Common myeloid progenitor, CD34-positive (primary cell): ENCODE measurements at regions of chr19 and their contacts with region 1.

Region 1: GRCh38 chr19:7799640-7800355 is 30.2 kb upstream of the EVI5L start:
- DNase-seq: peak; percentile 50 to 67 (median 66)
- H3K4me3 ChIP-seq: peak overlapping the region in 5 of 7 experiments; percentile 6 to 71 (median 51)
- H3K27ac ChIP-seq: no peak overlapping the region
- H3K4me1 ChIP-seq: peaks cover 0 to 11% (median 7%) of the 10 kb centered on the region in 4 experiments
- H3K27me3 ChIP-seq: peaks cover 0 to 12% (median 4%) of the 10 kb centered on the region in 5 experiments

Region 2: GRCh38 chr19:7652061-7652641 is 147.6 kb before region 1 on chr19:
- CTCF ChIA-PET with region 1: interaction called, 19 read pairs
- POLR2A ChIA-PET with region 1: no interaction called
- DNase-seq: peak; percentile 80 to 90 (median 90)
- H3K4me3 ChIP-seq: peak overlapping the region in 5 of 7 experiments; percentile 21 to 72 (median 40)
- H3K27ac ChIP-seq: no peak overlapping the region
- H3K4me1 ChIP-seq: peaks cover 0 to 26% (median 5%) of the 10 kb centered on the region in 4 experiments
- H3K27me3 ChIP-seq: peaks cover 0 to 4% (median 0%) of the 10 kb centered on the region in 5 experiments

Region 3: GRCh38 chr19:7685541-7686416 is 114.0 kb before region 1 on chr19:
- CTCF ChIA-PET with region 1: interaction called, 49 read pairs
- POLR2A ChIA-PET with region 1: interaction called, 3 read pairs
- DNase-seq: no peak
- H3K4me3 ChIP-seq: no peak overlapping the region
- H3K27ac ChIP-seq: no peak overlapping the region
- H3K4me1 ChIP-seq: peaks cover 0 to 18% (median 15%) of the 10 kb centered on the region in 4 experiments
- H3K27me3 ChIP-seq: peaks cover 0 to 3% (median 0%) of the 10 kb centered on the region in 5 experiments

Region 4: DNA sequence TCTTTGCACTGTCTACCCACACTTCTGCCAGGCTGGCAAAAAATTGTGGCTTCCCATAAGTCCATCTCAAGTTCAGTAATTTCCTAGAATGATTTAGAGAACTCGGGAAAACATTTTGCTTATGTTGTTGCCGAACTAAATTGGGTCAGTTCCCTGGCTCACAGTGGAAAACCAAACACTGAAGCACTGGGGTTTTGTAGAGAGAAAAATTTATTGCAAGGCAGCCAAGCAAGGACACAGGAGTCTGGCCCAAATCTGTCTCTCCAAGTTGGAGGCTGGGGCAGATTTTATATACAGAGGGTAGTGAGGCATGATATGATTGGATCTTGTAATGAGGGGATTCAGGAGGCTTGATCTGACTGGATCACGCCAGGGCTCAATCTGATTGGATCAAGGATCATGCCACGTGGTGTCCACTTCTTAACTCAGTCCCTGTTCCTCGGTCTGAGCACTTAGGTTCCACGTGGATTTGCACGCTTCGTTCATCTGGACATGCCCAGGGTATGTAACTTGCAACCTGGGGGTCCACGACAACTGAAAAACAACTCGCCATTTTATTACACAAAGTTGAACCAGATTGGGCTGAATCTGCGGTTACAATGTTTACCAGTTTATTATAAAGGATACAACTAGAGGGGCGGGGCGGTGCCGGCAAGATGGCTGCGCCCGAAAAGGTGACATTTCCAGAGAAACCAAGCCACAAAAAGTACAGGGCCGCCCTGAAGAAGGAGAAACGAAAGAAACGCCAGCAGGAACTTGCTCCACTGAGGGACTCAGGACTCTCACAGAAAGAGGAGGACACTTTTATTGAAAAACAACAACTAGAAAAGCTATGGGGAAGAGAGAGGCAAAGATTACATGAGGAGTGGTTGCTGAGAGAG is 59.8 kb before region 1 on chr19:
- CTCF ChIA-PET with region 1: no interaction called
- POLR2A ChIA-PET with region 1: no interaction called
- DNase-seq: no peak
- H3K4me3 ChIP-seq: no peak overlapping the region
- H3K27ac ChIP-seq: no peak overlapping the region
- H3K4me1 ChIP-seq: no peaks in the 10 kb centered on the region
- H3K27me3 ChIP-seq: peaks cover 0 to 13% (median 2%) of the 10 kb centered on the region in 5 experiments